ENCODE measurements at regions of chr6 and their contacts with region 1.

Region 1: GRCh38 chr6:5030596-5031136 is 26.8 kb upstream of the RPP40 start:
- DNase-seq: peak; percentile 83
- H3K4me3 ChIP-seq: no peak overlapping the region
- H3K27ac ChIP-seq: no peak overlapping the region
- H3K4me1 ChIP-seq: peaks cover 7% of the 10 kb centered on the region
- H3K27me3 ChIP-seq: no peaks in the 10 kb centered on the region
- CTCF ChIP-seq: peak; percentile 71 to 74
- POLR2A ChIP-seq: no peak

Region 2: GRCh38 chr6:4941782-4942672 is 88.6 kb before region 1 on chr6:
- CTCF ChIA-PET with region 1: interaction called, 11 read pairs
- POLR2A ChIA-PET with region 1: no interaction called
- dilution Hi-C with region 1: no loop called
- intact Hi-C with region 1: loop called (anchors 2 kb)
- DNase-seq: peak; percentile 70
- H3K4me3 ChIP-seq: no peak overlapping the region
- H3K27ac ChIP-seq: no peak overlapping the region
- H3K4me1 ChIP-seq: peaks cover 14% of the 10 kb centered on the region
- H3K27me3 ChIP-seq: no peaks in the 10 kb centered on the region
- CTCF ChIP-seq: no peak
- POLR2A ChIP-seq: no peak

Region 3: GRCh38 chr6:5003604-5004372 is 26.9 kb before region 1 on chr6 and contains the start of gene RPP40:
- CTCF ChIA-PET with region 1: interaction called, 12 read pairs
- POLR2A ChIA-PET with region 1: no interaction called
- dilution Hi-C with region 1: no loop called
- intact Hi-C with region 1: loop called (anchors 1 kb)
- DNase-seq: peak; percentile 98
- H3K4me3 ChIP-seq: peak within 1 kb of the TSS; percentile 51 to 72 (median 63)
- H3K27ac ChIP-seq: peak within 1 kb of the TSS; percentile 79
- H3K4me1 ChIP-seq: peaks cover 7% of the 10 kb centered on the region
- H3K27me3 ChIP-seq: no peaks in the 10 kb centered on the region
- CTCF ChIP-seq: peak; percentile 74 to 85
- POLR2A ChIP-seq: peak; percentile 88
- total RNA-seq, gene RPP40: 12.6 and 15.3 TPM in 2 replicates

Region 4: DNA sequence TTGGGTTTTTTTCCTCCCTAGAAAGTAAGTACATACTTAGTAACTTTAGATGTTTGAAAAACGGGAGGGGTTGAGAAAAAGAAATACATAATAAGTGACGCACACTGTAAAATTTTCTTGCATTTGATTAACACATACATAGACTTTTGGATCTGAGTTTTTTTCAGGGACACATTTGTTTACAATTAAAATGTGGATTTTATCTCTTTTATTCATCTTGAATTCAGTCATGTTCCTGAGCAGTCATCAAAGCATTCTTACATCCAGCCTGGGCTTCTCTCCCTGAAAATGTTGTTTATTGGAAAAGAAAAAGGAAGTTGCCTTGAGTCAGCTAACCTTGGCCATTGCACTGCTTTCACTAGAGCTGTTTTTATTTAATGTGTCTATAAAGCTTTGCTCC is 18.1 kb before region 1 on chr6:
- CTCF ChIA-PET with region 1: interaction called, 37 read pairs
- POLR2A ChIA-PET with region 1: no interaction called
- dilution Hi-C with region 1: no loop called
- intact Hi-C with region 1: no loop called
- DNase-seq: peak; percentile 89
- H3K4me3 ChIP-seq: no peak overlapping the region
- H3K27ac ChIP-seq: peak overlapping the region; percentile 34
- H3K4me1 ChIP-seq: peaks cover 9% of the 10 kb centered on the region
- H3K27me3 ChIP-seq: no peaks in the 10 kb centered on the region
- CTCF ChIP-seq: no peak
- POLR2A ChIP-seq: no peak